SK-N-SH (cell line): ENCODE measurements at regions of chr6 and their contacts with region 1.

Region 1: DNA sequence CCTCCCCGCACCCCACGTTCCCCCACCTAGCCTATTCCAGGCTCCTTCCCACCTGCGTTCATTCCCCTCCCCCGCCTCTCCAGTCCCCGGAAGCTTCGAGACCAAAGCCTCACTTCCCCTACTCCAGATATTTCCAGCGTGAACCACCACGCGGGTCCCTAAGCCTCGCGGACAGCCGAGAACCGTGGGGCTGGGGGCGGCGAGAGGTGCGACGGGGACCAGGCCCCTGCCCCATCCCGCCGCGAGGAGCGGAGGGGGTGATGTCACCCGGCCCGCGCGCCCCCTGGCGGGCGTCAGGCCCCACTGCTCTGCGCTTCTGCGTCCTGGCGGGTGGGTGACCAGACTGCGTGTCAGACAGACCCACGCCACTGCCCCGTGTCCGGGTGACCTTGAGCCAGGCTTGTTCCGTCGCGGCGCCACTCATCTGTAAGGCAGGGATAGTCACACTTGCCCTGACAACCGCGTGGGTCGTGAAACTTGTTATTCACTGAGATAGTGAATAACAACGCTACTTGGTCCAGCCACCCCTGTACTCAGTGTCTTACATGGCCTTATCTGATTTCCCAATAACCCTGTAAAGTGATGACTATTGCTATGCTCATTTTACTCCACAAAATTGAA is 9.0 kb upstream of the HSP90AB1 start:
- DNase-seq: peak; percentile 92
- H3K4me3 ChIP-seq: peak overlapping the region; percentile 53 to 62
- H3K27ac ChIP-seq: peak overlapping the region; percentile 84 to 90
- H3K4me1 ChIP-seq: peaks cover 26 to 45% of the 10 kb centered on the region in 2 experiments
- H3K27me3 ChIP-seq: no peaks in the 10 kb centered on the region
- CTCF ChIP-seq: peak; percentile 93
- EP300 ChIP-seq: no peak
- RAD21 ChIP-seq: peak; percentile 58

Region 2: GRCh38 chr6:44151348-44152108 is 86.4 kb before region 1 on chr6:
- CTCF ChIA-PET with region 1: interaction called, 16 read pairs
- POLR2A ChIA-PET with region 1: no interaction called
- DNase-seq: peak; percentile 93
- H3K4me3 ChIP-seq: peak overlapping the region in 1 of 2 experiments; percentile 49; a peak in 1 of 4 replicates
- H3K27ac ChIP-seq: no peak overlapping the region
- H3K4me1 ChIP-seq: peaks cover 0 to 3% of the 10 kb centered on the region in 2 experiments; a peak in 1 of 4 replicates
- H3K27me3 ChIP-seq: no peaks in the 10 kb centered on the region
- CTCF ChIP-seq: peak; percentile 97
- EP300 ChIP-seq: no peak
- RAD21 ChIP-seq: peak; percentile 67

Region 3: DNA sequence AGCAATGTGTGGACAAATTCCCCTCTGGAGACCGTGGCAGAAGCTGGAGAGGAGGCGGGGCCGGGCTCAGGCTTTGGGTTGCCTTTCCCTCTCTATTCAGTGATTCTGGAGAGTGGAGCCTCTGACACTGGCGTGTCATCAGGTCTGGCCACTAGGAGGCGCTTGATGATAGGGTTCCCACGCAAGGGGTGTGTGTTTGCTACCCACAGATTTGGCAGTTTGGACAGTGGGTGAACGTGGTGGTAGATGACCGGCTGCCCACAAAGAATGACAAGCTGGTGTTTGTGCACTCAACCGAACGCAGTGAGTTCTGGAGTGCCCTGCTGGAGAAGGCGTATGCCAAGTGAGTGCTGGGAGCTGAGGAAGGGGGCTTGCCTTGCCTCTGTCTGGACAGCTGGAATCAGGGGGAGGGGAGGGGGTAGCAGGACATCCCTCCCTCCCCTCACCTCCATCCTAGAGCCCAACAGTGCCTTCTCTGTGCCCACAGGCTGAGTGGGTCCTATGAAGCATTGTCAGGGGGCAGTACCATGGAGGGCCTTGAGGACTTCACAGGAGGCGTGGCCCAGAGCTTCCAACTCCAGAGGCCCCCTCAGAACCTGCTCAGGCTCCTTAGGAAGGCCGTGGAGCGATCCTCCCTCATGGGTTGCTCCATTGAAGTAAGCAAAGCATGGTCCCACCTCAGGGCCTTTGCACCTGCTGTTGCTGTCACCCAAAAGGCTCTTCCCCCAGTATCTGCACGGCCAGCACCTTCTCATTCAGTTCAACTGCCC is 65.0 kb before region 1 on chr6:
- CTCF ChIA-PET with region 1: interaction called, 128 read pairs
- POLR2A ChIA-PET with region 1: interaction called, 4 read pairs
- DNase-seq: peak; percentile 88
- H3K4me3 ChIP-seq: no peak overlapping the region
- H3K27ac ChIP-seq: no peak overlapping the region
- H3K4me1 ChIP-seq: peaks cover 0 to 4% of the 10 kb centered on the region in 2 experiments; a peak in 1 of 4 replicates
- H3K27me3 ChIP-seq: no peaks in the 10 kb centered on the region
- CTCF ChIP-seq: peak; percentile 90
- EP300 ChIP-seq: no peak
- RAD21 ChIP-seq: peak; percentile 95

Region 4: DNA sequence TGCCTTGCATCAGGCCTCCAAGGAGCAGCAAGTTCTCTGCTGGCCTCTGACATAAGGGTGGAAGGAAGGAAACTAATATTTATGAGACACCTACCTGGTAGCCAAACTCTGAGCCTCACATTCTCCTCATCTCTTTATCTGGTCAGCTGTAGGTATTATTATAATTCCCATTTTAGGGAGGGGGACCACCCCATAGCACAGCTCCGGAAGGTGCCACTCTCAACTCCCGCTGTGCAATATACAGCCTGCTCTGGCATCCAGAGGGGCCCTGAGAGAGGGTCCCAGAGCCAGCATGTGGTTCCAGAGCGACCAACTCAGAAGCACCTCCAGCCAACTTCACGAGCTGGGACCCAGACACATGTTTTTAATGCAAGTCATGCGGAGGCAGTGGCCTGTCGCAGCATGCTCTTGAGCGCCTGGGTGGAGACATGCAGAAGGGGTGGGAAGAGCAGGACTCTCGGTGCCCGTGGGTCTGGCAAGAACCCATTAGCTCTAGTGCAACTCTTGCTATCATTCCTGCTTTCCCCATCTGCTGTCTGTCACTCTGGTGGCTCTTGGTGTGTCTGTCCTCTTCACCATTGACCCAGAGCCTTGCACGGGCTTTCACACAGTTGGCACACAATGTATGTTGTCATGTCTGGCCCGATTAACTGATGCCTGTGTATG is 36.2 kb before region 1 on chr6:
- CTCF ChIA-PET with region 1: interaction called, 25 read pairs
- POLR2A ChIA-PET with region 1: no interaction called
- DNase-seq: no peak
- H3K4me3 ChIP-seq: no peak overlapping the region
- H3K27ac ChIP-seq: no peak overlapping the region
- H3K4me1 ChIP-seq: peaks cover 0 to 2% of the 10 kb centered on the region in 2 experiments; a peak in 1 of 4 replicates
- H3K27me3 ChIP-seq: no peaks in the 10 kb centered on the region
- CTCF ChIP-seq: no peak
- EP300 ChIP-seq: no peak
- RAD21 ChIP-seq: no peak

Region 5: DNA sequence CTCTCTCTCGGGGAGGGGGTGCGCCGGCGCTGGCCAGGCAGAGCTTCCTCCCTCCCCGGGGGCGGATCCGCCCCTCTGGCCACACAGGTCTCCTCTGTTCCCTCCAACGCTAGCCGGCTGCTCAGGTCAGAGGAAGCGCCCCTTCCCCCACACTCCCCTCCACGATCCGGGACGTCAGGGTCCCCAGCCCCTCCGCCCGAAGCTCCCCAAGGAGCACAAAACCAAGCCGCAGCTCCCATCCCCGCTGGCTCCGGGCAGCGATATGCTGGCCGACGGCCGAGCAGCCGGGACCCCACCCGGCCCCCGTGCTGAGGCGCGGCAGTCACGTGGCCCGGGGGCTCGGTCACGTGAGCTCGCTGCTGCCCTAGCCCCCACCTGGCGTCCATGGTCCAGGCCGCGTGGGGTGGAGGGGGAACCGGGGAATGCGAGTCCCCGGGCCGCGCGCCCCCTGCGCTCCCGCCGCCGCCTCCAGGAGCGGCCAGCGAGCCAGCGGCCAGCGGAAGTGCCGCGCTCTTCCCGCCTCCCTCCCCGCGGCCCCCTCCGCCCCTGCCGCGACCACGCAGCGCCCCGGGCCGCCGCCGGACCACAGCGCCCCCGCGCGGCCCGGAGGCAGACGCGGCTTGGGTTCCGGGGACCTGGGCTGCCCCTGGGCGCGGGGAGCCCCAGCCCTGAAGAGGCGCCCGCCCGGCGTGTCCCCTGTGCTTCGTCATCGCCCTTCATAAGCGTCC is 19.3 kb after region 1 on chr6 and contains the start of gene SLC35B2:
- CTCF ChIA-PET with region 1: interaction called, 90 read pairs
- POLR2A ChIA-PET with region 1: no interaction called
- DNase-seq: peak; percentile 95
- H3K4me3 ChIP-seq: peak within 1 kb of the TSS; percentile 94 to 96
- H3K27ac ChIP-seq: peak within 1 kb of the TSS; percentile 73 to 91
- H3K4me1 ChIP-seq: peaks cover 0 to 37% of the 10 kb centered on the region in 2 experiments; a peak in 1 of 4 replicates
- H3K27me3 ChIP-seq: no peaks in the 10 kb centered on the region
- CTCF ChIP-seq: peak; percentile 67
- EP300 ChIP-seq: no peak
- RAD21 ChIP-seq: no peak
- polyA plus RNA-seq, gene SLC35B2: 125 and 163 TPM in 2 replicates